ENCODE measurements at regions of chr10 and their contacts with region 1.

Region 1: GRCh38 chr10:56341612-56342011 is 19.4 kb downstream of the ZWINT start:
- DNase-seq: no peak
- H3K4me3 ChIP-seq: no peak overlapping the region
- H3K27ac ChIP-seq: no peak overlapping the region
- H3K4me1 ChIP-seq: no peaks in the 10 kb centered on the region
- H3K27me3 ChIP-seq: no peaks in the 10 kb centered on the region
- CTCF ChIP-seq: no peak
- POLR2A ChIP-seq: no peak

Region 2: GRCh38 chr10:56279270-56279669 is 62.3 kb before region 1 on chr10:
- intact Hi-C with region 1: no loop called
- DNase-seq: no peak
- H3K4me3 ChIP-seq: no peak overlapping the region
- H3K27ac ChIP-seq: no peak overlapping the region
- H3K4me1 ChIP-seq: no peaks in the 10 kb centered on the region
- H3K27me3 ChIP-seq: no peaks in the 10 kb centered on the region
- CTCF ChIP-seq: no peak
- POLR2A ChIP-seq: no peak

Region 3: DNA sequence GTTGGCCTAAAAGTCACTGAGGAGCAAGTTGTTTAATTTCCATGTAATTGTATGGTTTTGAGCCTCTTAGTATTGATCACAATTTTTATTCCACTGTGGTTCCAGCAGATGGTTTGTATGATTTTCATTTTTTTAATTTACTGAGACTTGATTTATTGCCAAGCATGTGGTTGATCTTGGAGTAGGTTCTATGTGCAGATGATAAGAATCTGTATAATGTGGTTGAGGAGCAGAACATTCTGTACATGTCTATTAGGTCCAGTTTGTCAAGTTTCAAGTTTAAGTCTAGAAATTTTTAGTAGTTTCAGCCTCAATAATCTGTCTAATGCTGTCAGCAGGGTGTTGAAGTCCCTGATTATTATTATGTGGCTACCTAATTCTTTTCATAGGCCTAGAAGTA is 42.2 kb after region 1 on chr10:
- intact Hi-C with region 1: loop called (anchors 5 kb)
- DNase-seq: no peak
- H3K4me3 ChIP-seq: no peak overlapping the region
- H3K27ac ChIP-seq: no peak overlapping the region
- H3K4me1 ChIP-seq: no peaks in the 10 kb centered on the region
- H3K27me3 ChIP-seq: no peaks in the 10 kb centered on the region
- CTCF ChIP-seq: no peak
- POLR2A ChIP-seq: no peak

Region 4: DNA sequence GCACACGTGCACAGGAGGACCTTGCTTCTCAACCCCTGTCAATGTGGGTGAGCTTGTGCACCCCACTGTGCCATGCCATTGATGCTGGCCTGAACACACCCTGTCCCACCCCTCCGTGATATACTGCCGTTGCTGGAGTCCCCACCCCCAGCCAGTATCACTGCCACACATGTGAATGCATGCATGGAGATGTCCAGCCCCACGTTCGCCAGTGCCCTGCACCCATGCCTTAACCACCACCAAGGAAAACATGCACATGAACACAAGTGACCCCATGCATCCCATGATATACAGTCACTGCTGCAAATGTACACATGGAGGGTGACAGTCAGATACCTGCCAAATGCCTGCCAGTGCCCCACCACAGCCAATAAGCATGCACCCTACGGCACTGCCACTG is 711.9 kb after region 1 on chr10:
- intact Hi-C with region 1: no loop called
- DNase-seq: no peak
- H3K4me3 ChIP-seq: no peak overlapping the region
- H3K27ac ChIP-seq: no peak overlapping the region
- H3K4me1 ChIP-seq: no peaks in the 10 kb centered on the region
- H3K27me3 ChIP-seq: no peaks in the 10 kb centered on the region
- CTCF ChIP-seq: no peak
- POLR2A ChIP-seq: no peak

Measured in spleen (tissue), 13 donors.